Common myeloid progenitor, CD34-positive (primary cell): ENCODE measurements at regions of chr3 and their contacts with region 1.

Region 1: GRCh38 chr3:52231502-52232293 is 6.3 kb upstream of the TLR9 start:
- DNase-seq: peak; percentile 77 to 87 (median 80)
- H3K4me3 ChIP-seq: peak overlapping the region in 1 of 7 experiments; percentile 8
- H3K27ac ChIP-seq: no peak overlapping the region
- H3K4me1 ChIP-seq: peaks cover 0 to 19% (median 13%) of the 10 kb centered on the region in 4 experiments
- H3K27me3 ChIP-seq: no peaks in the 10 kb centered on the region

Region 2: GRCh38 chr3:52220380-52221026 is 11.2 kb before region 1 on chr3:
- CTCF ChIA-PET with region 1: interaction called, 85 read pairs
- POLR2A ChIA-PET with region 1: interaction called, 4 read pairs
- DNase-seq: peak; percentile 79 to 90 (median 84)
- H3K4me3 ChIP-seq: no peak overlapping the region
- H3K27ac ChIP-seq: no peak overlapping the region
- H3K4me1 ChIP-seq: peaks cover 10 to 80% (median 59%) of the 10 kb centered on the region in 4 experiments
- H3K27me3 ChIP-seq: no peaks in the 10 kb centered on the region

Region 3: DNA sequence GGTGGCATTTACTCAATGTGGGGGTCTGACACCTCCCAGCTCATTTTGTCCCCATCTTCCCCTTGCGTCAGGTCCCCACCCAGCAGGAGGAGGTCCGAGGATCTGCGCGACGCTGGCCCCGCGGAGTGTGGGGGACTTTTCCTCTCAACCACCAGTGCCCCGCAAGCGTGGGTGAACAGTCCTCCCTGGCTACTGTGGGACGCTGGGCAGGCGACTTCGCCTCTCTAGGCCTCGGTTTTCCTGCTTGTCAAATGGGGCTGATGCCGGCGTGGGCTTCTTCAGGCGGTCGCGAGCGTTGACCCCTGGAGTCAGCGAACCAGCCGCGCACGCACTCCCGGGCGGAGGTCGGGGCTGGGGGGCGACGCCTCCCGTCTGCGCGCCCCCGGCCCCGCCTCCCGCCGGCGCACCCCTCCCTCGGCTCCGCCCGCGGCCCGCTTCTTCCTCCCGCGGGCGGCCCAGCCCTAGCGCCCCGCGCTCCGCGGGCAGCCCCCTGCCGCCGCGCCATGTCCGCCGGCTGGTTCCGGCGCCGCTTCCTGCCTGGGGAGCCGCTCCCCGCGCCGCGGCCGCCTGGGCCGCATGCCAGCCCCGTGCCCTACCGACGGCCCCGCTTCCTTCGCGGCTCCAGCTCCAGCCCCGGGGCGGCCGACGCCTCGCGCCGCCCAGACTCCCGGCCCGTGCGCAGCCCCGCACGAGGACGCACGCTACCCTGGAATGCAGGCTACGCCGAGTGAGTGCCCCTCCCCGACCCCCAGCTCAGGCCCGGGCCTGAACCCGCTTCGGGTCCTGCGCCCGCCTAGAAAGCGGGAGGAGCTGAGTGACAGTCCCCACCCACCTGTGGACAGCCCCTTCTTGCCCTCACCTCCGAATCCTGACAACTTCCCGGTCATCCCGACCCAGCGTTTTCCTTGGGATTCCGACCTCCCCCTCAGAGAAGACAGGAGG is 13.9 kb after region 1 on chr3 and contains the start of gene PPM1M:
- CTCF ChIA-PET with region 1: interaction called, 161 read pairs
- POLR2A ChIA-PET with region 1: no interaction called
- DNase-seq: peak; percentile 77 to 90 (median 85)
- H3K4me3 ChIP-seq: peak within 1 kb of the TSS; percentile 19 to 74 (median 49)
- H3K27ac ChIP-seq: peak within 1 kb of the TSS in 1 of 2 experiments; percentile 9
- H3K4me1 ChIP-seq: peaks cover 0 to 43% (median 35%) of the 10 kb centered on the region in 4 experiments
- H3K27me3 ChIP-seq: no peaks in the 10 kb centered on the region

Region 4: DNA sequence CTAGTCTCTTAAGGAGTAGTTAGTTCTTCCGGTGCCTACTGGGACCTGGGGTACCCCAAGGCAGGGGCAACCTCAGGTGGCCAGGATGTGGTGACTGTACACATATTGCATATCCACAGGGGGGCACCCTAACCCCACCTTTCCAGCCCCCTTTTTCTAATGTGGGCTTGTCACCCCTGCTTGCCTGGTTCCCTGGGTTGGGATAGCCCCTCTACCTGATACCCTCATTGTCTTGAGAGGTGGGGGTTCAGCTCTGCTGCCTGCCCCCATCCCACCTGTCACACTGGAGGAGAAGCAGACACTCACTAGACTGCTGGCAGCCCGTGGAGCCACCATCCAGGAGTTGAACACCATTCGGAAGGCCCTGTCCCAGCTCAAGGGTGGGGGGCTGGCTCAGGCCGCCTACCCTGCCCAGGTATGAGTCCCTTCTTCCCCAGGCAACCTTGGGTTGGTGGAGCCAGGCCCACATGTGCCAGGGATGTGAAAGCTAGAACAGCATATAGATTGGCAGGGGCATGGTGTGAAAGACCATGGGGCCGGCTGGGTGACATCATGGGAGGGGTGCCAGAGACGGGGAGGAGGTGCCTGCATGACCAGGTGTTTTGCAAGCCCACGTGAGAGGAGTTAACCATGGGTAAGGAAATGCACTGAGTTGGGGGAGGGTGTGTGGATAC is 59.9 kb after region 1 on chr3:
- CTCF ChIA-PET with region 1: interaction called, 65 read pairs
- POLR2A ChIA-PET with region 1: interaction called, 3 read pairs
- DNase-seq: peak; percentile 39 to 65 (median 57)
- H3K4me3 ChIP-seq: no peak overlapping the region
- H3K27ac ChIP-seq: no peak overlapping the region
- H3K4me1 ChIP-seq: peaks cover 3 to 33% (median 19%) of the 10 kb centered on the region in 4 experiments
- H3K27me3 ChIP-seq: no peaks in the 10 kb centered on the region

Region 5: GRCh38 chr3:52328536-52329080 is 96.9 kb after region 1 on chr3:
- CTCF ChIA-PET with region 1: interaction called, 12 read pairs
- POLR2A ChIA-PET with region 1: no interaction called
- DNase-seq: no peak
- H3K4me3 ChIP-seq: no peak overlapping the region
- H3K27ac ChIP-seq: no peak overlapping the region
- H3K4me1 ChIP-seq: no peaks in the 10 kb centered on the region
- H3K27me3 ChIP-seq: no peaks in the 10 kb centered on the region

Region 6: GRCh38 chr3:52333869-52334557 is 102.3 kb after region 1 on chr3:
- CTCF ChIA-PET with region 1: interaction called, 122 read pairs
- POLR2A ChIA-PET with region 1: interaction called, 3 read pairs
- DNase-seq: no peak
- H3K4me3 ChIP-seq: no peak overlapping the region
- H3K27ac ChIP-seq: no peak overlapping the region
- H3K4me1 ChIP-seq: no peaks in the 10 kb centered on the region
- H3K27me3 ChIP-seq: no peaks in the 10 kb centered on the region